ENCODE measurements at regions of chrX and their contacts with region 1.

Region 1: GRCh38 chrX:40169193-40170101 is 71.7 kb upstream of the BCOR start:
- DNase-seq: peak; percentile 75
- ATAC-seq: peak; percentile 65
- H3K4me3 Mint-ChIP-seq: peak overlapping the region; percentile 88
- H3K27ac Mint-ChIP-seq: peak overlapping the region; percentile 98
- H3K4me1 Mint-ChIP-seq: peaks cover 36% of the 10 kb centered on the region
- H3K27me3 Mint-ChIP-seq: no peaks in the 10 kb centered on the region

Region 2: GRCh38 chrX:40013266-40014195 is 155.9 kb before region 1 on chrX:
- POLR2A ChIA-PET with region 1: interaction called, 16 read pairs
- DNase-seq: peak; percentile 62
- ATAC-seq: peak; percentile 46
- H3K4me3 Mint-ChIP-seq: peak overlapping the region; percentile 75
- H3K27ac Mint-ChIP-seq: peak overlapping the region; percentile 80
- H3K4me1 Mint-ChIP-seq: peaks cover 22% of the 10 kb centered on the region
- H3K27me3 Mint-ChIP-seq: peaks cover 11% of the 10 kb centered on the region

Region 3: GRCh38 chrX:40041915-40042314 is 127.5 kb before region 1 on chrX:
- POLR2A ChIA-PET with region 1: no interaction called
- DNase-seq: peak; percentile 33
- ATAC-seq: peak; percentile 45
- H3K4me3 Mint-ChIP-seq: peak overlapping the region; percentile 20
- H3K27ac Mint-ChIP-seq: peak overlapping the region; percentile 73
- H3K4me1 Mint-ChIP-seq: peaks cover 18% of the 10 kb centered on the region
- H3K27me3 Mint-ChIP-seq: no peaks in the 10 kb centered on the region

Region 4: GRCh38 chrX:40153335-40154249 is 15.9 kb before region 1 on chrX:
- POLR2A ChIA-PET with region 1: interaction called, 28 read pairs
- DNase-seq: peak; percentile 68
- ATAC-seq: peak; percentile 53
- H3K4me3 Mint-ChIP-seq: peak overlapping the region; percentile 85
- H3K27ac Mint-ChIP-seq: peak overlapping the region; percentile 67
- H3K4me1 Mint-ChIP-seq: peaks cover 6% of the 10 kb centered on the region
- H3K27me3 Mint-ChIP-seq: no peaks in the 10 kb centered on the region

Region 5: GRCh38 chrX:40201329-40201885 is 32.0 kb after region 1 on chrX:
- POLR2A ChIA-PET with region 1: interaction called, 33 read pairs
- DNase-seq: peak; percentile 32
- ATAC-seq: peak; percentile 96
- H3K4me3 Mint-ChIP-seq: peak overlapping the region; percentile 73
- H3K27ac Mint-ChIP-seq: peak overlapping the region; percentile 95
- H3K4me1 Mint-ChIP-seq: peaks cover 18% of the 10 kb centered on the region
- H3K27me3 Mint-ChIP-seq: no peaks in the 10 kb centered on the region